HAP-1 (cell line): ENCODE measurements at regions of chr1 and their contacts with region 1.

Region 1: GRCh38 chr1:147541672-147542568 is 619 bp downstream of the BCL9 start:
- DNase-seq: peak; percentile 36 to 66
- H3K4me3 ChIP-seq: peak overlapping the region; percentile 52
- H3K4me1 ChIP-seq: peaks cover 43% of the 10 kb centered on the region
- H3K27me3 ChIP-seq: no peaks in the 10 kb centered on the region

Region 2: GRCh38 chr1:147599362-147600118 is 57.6 kb after region 1 on chr1:
- in situ Hi-C with region 1: loop called (anchors 5 kb)
- DNase-seq: peak; percentile 88 to 98
- H3K4me3 ChIP-seq: peak overlapping the region; percentile 41
- H3K4me1 ChIP-seq: peaks cover 33% of the 10 kb centered on the region
- H3K27me3 ChIP-seq: no peaks in the 10 kb centered on the region

Region 3: DNA sequence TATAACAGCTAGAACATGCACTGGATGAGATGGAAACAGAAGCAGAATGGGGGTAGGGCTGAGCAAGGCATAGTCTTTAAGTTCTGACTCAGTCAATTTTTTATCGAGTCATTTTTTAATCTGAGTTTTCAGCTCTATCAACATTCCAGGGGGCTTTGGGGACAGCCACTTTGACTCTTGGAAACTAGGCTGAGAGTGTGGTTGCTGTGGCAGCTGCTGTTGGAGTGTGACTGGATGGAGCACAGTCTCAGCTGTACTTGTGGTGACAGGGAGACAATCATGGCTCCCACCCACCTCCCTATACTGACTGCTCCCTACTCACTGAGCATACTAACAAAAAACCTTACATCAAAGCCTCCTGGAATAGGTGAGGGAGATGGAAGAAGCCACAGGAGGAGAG is 193.5 kb after region 1 on chr1:
- in situ Hi-C with region 1: no loop called
- DNase-seq: no peak
- H3K4me3 ChIP-seq: no peak overlapping the region
- H3K4me1 ChIP-seq: peaks cover 11% of the 10 kb centered on the region
- H3K27me3 ChIP-seq: no peaks in the 10 kb centered on the region